GM13977 (cell line): ENCODE measurements at regions of chr4 and their contacts with region 1.

Region 1: GRCh38 chr4:38179690-38180377 is 219.6 kb downstream of the PTTG2 start:
- DNase-seq: peak; percentile 73
- CTCF ChIP-seq: peak; percentile 83

Region 2: GRCh38 chr4:38319456-38320342 is 139.9 kb after region 1 on chr4:
- in situ Hi-C with region 1: loop called (anchors 5 kb)
- DNase-seq: peak; percentile 89
- CTCF ChIP-seq: peak; percentile 95

Region 3: DNA sequence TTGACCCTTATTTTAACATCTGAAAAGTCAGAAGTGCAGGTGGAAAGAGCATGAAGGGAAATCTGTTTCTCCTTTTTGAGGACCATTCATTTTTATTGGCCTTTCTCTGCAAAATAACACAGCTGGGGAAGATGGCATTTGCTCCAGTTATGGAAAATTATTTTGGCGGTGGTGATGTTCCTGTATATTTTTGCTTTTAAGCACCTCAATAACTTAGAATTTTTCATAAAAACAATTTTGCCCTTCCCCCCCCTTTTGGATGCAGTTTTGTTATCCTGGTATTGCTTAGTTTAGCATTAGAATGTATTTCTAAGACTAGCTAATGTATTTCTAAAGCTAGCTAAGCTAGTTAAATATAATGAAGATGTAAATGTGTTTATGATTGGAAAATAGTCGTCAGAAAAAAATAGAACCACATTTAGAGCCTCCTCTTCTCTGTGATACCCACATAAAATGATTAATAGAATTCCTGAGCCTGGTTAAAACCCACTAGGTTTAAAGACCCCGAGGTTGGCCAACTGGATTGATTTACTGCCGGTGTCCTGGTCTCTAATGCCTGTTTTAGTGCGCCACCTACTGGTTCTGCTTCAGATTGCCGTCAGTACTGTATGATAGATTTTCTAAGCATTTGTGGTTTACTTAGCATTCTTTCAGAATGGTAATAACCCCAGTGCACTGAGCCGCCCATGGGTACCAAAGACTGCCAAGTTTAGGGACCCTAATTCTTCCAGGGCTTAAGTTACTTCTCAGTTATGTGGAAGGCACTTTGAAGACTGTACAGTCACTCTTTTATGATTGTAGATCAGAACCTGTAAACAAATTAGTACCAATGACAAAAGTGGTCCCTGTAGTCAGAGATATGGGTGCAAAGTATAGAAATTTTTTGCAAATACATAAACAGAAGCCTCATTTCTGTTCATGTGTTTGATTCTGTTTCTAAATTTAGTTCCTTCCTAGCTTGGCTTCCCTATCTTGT is 495.6 kb after region 1 on chr4:
- in situ Hi-C with region 1: loop called (anchors 5 kb)
- DNase-seq: peak; percentile 71
- CTCF ChIP-seq: peak; percentile 87

Region 4: GRCh38 chr4:38730830-38731646 is 551.2 kb after region 1 on chr4:
- in situ Hi-C with region 1: loop called (anchors 10 kb)
- DNase-seq: peak; percentile 73
- CTCF ChIP-seq: peak; percentile 91

Region 5: GRCh38 chr4:38914854-38915253 is 735.0 kb after region 1 on chr4:
- in situ Hi-C with region 1: no loop called
- DNase-seq: no peak
- CTCF ChIP-seq: no peak